Posterior cingulate gyrus (tissue), 11 donors: ENCODE measurements at regions of chr7 and their contacts with region 1.

Region 1: DNA sequence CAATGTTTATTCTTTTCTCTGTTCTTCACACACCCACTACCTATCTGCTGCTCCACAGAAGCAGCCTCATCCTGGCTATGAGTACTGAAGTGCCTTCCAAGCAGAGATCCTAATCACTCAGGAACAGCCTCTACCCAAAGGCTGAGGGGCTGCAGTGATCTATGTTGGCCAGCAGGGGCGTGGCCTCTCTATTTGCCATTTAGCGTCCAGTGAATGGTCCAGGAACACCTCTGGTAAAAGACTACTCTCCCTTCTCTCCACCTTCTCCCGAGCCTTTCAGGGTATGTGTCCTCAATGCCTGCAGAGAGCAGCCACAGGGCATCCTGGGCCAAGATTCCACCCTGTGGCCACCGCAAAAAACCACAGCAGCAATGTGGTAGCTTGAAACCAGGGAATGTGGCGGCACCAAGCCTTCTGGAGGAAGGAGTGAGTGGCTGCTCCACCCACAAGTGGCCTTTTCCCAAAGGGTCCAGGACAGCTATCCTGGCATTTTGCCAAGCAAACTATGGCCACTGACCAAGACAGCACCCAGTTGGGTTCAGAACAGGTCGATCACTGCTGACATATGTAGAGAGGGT is 70.9 kb downstream of the SYPL1 start:
- DNase-seq: peak in 6 of 10 donors; percentile 26 to 88 (median 58)

Region 2: GRCh38 chr7:105652359-105652993 is 388.8 kb before region 1 on chr7:
- intact Hi-C with region 1: loop called (anchors 1 kb)
- DNase-seq: peak; percentile 71 to 98 (median 86)

Region 3: GRCh38 chr7:105759670-105760550 is 281.3 kb before region 1 on chr7:
- intact Hi-C with region 1: loop called (anchors 1 kb)
- DNase-seq: peak in 5 of 10 donors; percentile 45 to 86 (median 61)

Region 4: DNA sequence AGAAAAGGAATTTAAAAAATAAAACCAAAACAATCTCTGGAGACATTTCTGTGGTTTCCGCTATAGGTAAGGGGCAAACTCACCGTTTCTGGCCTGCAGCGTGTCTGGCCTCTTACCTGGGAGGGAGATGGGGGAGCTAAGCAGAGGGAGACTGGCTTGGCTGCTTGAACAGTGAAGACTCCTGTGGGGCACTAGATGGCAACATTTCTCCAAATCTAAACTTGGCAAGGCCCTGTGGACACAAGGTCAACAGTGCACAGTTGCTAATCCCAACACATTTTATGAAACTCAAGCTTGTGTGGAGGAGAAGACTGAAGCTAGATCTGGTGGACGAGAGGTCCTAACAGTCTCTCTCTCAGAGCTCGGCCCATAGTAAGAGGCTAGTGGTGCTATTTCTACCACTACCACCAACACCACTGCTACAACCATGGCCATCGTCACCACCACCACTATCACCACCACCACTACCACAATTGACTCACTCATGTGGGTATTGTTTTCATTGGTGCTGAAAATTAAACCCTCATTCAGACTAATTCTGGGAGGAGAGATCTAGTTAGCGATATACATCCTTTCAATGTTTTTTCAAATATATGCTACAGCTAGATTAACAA is 106.5 kb before region 1 on chr7:
- intact Hi-C with region 1: loop called (anchors 10 kb)
- DNase-seq: no peak